ENCODE measurements at regions of chr6 and their contacts with region 1.

Region 1: DNA sequence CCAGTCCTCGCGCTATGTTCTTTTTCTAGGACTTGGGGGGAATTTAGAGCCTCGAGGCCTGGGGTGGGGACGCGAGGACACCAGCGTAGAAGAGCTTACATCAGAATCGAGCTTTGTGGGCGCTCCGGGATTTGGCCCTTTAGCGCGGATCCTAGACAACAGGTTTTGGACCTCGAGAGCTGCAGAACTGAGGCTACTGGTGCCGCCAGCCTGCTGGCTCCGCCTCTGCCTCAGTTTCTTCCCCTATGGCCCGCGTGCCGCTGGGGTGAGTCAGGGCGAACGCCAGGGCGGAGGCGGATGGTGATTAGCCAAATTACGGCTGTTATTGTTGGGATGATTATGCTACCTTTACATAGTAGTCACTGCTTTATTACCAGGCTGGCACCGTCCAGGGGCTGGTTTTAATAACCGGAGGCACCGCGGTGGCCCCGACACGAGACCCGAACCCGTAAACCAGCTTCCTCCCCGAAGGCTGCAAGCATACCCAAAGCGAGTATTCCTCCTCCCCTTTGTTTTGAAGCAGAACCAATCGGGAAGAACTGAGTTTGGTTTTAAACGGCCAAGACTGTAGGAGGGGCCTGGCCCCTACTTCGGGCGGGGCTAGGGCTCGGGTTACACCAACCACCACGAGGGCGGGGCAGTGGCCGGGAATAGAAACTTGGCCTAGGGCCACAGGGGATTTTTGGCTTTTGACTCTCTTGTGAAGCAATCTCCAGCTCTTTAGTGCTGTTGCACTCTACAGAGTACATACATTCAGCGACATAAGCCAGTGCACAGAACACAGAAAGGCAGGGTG is 639 bp upstream of the GTPBP2 start:
- DNase-seq: peak; percentile 96 to 97
- H3K4me3 ChIP-seq: peak overlapping the region; percentile 93
- H3K27ac ChIP-seq: peak overlapping the region; percentile 97
- H3K4me1 ChIP-seq: peaks cover 34% of the 10 kb centered on the region
- H3K27me3 ChIP-seq: no peaks in the 10 kb centered on the region
- CTCF ChIP-seq: no peak

Region 2: GRCh38 chr6:43856005-43856765 is 226.5 kb after region 1 on chr6:
- CTCF ChIA-PET with region 1: no interaction called
- POLR2A ChIA-PET with region 1: no interaction called
- intact Hi-C with region 1: no loop called
- DNase-seq: peak; percentile 49 to 66
- H3K4me3 ChIP-seq: no peak overlapping the region
- H3K27ac ChIP-seq: 0 out of 2 replicates have a peak overlapping the region, but pooled peaks have one; percentile 2
- H3K4me1 ChIP-seq: peaks cover 37% of the 10 kb centered on the region
- H3K27me3 ChIP-seq: no peaks in the 10 kb centered on the region
- CTCF ChIP-seq: peak; percentile 66

Region 3: GRCh38 chr6:44034391-44034861 is 404.7 kb after region 1 on chr6:
- CTCF ChIA-PET with region 1: no interaction called
- POLR2A ChIA-PET with region 1: interaction called, 35 read pairs
- intact Hi-C with region 1: no loop called
- DNase-seq: peak; percentile 87 to 94
- H3K4me3 ChIP-seq: peak overlapping the region; percentile 48; the same call in 1 of the 2 replicates
- H3K27ac ChIP-seq: peak overlapping the region; percentile 98
- H3K4me1 ChIP-seq: peaks cover 87% of the 10 kb centered on the region
- H3K27me3 ChIP-seq: no peaks in the 10 kb centered on the region
- CTCF ChIP-seq: no peak